Psoas muscle (tissue), 8 donors: ENCODE measurements at regions of chr2 and their contacts with region 1.

Region 1: GRCh38 chr2:135913727-135914365 is 37.6 kb upstream of the MCM6 start:
- DNase-seq: no peak
- ATAC-seq: no peak
- H3K4me3 ChIP-seq: no peak overlapping the region
- H3K27ac ChIP-seq: no peak overlapping the region
- H3K4me1 ChIP-seq: no peaks in the 10 kb centered on the region
- H3K27me3 ChIP-seq: no peaks in the 10 kb centered on the region
- CTCF ChIP-seq: peak; percentile 77

Region 2: GRCh38 chr2:136126021-136126420 is 212.2 kb after region 1 on chr2:
- intact Hi-C with region 1: no loop called
- DNase-seq: no peak
- ATAC-seq: no peak
- H3K4me3 ChIP-seq: no peak overlapping the region
- H3K27ac ChIP-seq: no peak overlapping the region
- H3K4me1 ChIP-seq: no peaks in the 10 kb centered on the region
- H3K27me3 ChIP-seq: peaks cover 0 to 41% (median 5%) of the 10 kb centered on the region in 3 donors
- CTCF ChIP-seq: no peak

Region 3: GRCh38 chr2:136378712-136379595 is 465.1 kb after region 1 on chr2:
- intact Hi-C with region 1: loop called (anchors 2 to 5 kb)
- DNase-seq: peak in 1 of 2 donors; percentile 27
- ATAC-seq: peak; percentile 43 to 77 (median 58)
- H3K4me3 ChIP-seq: no peak overlapping the region
- H3K27ac ChIP-seq: no peak overlapping the region
- H3K4me1 ChIP-seq: no peaks in the 10 kb centered on the region
- H3K27me3 ChIP-seq: no peaks in the 10 kb centered on the region
- CTCF ChIP-seq: peak; percentile 62

Region 4: DNA sequence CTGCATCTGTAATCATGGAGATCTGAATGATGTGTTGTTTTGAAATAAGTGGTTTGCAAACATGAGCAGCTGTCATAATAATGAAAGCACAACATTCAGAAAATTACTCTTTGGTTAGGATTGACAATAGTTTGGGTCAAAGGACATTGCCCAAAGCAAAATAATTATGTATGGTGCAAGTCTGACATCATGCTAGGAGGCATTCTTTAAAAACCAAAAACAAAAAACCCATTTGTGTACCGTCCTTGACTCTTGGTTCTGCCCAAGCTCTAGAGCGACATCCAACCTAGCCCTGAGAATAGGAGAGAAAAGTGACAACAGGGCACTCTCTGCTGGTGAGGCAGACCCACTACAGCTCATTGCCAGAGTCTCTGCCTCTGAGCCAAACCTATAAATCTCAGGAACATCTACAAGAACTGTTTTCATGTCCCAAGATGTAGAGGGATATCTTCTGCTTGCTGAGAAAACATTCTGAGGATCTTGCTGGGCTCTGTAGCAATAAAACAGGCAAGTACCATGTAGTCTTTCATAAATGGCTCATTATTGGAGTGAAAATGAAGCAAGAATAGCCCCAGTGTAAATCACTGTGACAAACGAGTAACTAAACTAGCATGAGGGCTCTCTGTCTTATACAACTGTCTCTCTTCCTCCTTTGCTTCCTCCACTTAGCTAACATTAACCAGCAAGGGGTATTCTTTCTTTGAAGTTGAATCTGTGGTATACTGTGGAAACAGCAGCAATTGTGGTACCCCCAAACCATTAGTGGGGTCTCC is 470.9 kb after region 1 on chr2:
- intact Hi-C with region 1: loop called (anchors 2 to 5 kb)
- DNase-seq: no peak
- ATAC-seq: peak in 2 of 4 donors; percentile 37 to 56
- H3K4me3 ChIP-seq: no peak overlapping the region
- H3K27ac ChIP-seq: no peak overlapping the region
- H3K4me1 ChIP-seq: no peaks in the 10 kb centered on the region
- H3K27me3 ChIP-seq: no peaks in the 10 kb centered on the region
- CTCF ChIP-seq: peak; percentile 39